A673 (cell line): ENCODE measurements at regions of chr5 and their contacts with region 1.

Region 1: DNA sequence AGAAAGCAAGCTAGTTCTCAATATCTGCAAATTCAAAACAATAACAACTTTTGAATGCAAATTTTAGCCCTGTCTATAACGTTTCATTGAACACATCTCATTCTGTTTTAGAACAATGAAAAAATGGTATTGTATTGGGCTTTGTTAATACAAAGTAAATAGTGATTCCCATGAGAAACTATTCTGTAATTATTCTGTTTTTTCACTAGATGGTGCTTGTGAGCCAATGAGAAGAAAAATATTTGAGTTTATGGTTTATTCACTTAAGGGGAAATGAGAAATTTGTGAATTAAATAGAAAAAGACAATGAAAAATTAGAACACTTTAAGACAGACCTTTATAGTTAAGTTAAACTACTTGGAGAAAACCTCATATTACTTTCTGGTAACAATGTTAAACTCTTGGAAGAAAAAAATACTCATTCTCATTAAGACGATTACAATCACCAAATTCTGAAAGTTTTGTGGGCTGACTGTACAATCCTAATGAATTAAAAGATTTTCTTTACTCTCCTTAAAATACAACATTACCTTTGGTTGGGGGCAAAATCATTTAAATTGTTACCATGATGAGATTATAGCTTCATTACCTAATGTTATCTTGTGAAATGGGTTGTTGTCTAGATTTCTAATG is 127.0 kb downstream of the NNT start:
- DNase-seq: peak; percentile 61
- H3K4me3 ChIP-seq: no peak overlapping the region
- H3K27ac ChIP-seq: no peak overlapping the region
- H3K4me1 ChIP-seq: peaks cover 12% of the 10 kb centered on the region
- H3K27me3 ChIP-seq: no peaks in the 10 kb centered on the region
- CTCF ChIP-seq: peak; percentile 71

Region 2: GRCh38 chr5:43256261-43256966 is 473.5 kb before region 1 on chr5:
- CTCF ChIA-PET with region 1: no interaction called
- POLR2A ChIA-PET with region 1: interaction called, 10 read pairs
- intact Hi-C with region 1: no loop called
- DNase-seq: no peak
- H3K4me3 ChIP-seq: no peak overlapping the region
- H3K27ac ChIP-seq: no peak overlapping the region
- H3K4me1 ChIP-seq: no peaks in the 10 kb centered on the region
- H3K27me3 ChIP-seq: no peaks in the 10 kb centered on the region
- CTCF ChIP-seq: no peak

Region 3: DNA sequence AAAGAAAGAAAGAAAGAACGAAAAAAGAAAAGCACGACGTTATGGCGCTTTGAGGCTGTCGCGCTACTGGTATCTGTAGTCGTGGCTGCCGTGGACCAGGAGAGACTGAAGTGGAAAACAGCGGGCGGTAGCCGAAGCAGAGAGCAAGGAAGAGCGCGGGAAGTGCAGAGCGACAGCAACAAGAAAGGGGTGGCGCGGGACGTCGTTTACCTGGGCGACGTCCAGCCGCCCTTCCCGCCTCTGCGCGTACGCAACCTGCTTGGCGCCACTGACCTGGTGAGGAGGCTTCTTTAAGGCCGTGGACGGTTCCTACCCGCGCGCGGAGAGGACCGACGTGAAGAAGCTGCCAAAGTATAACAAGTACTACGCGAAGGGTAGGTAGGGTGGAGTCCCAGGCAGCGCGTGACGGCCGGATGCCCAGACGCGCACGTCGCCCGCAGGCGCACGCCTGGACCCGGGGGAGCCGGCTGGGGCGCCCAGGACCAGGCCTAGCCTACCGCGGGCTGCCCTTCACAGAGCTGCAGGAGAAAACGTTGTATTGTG is 333.1 kb before region 1 on chr5:
- CTCF ChIA-PET with region 1: no interaction called
- POLR2A ChIA-PET with region 1: no interaction called
- intact Hi-C with region 1: no loop called
- DNase-seq: peak; percentile 46
- H3K4me3 ChIP-seq: peak overlapping the region; percentile 46
- H3K27ac ChIP-seq: no peak overlapping the region
- H3K4me1 ChIP-seq: no peaks in the 10 kb centered on the region
- H3K27me3 ChIP-seq: peaks cover 14% of the 10 kb centered on the region
- CTCF ChIP-seq: no peak

Region 4: GRCh38 chr5:43415946-43416802 is 313.8 kb before region 1 on chr5:
- CTCF ChIA-PET with region 1: no interaction called
- POLR2A ChIA-PET with region 1: no interaction called
- intact Hi-C with region 1: no loop called
- DNase-seq: no peak
- H3K4me3 ChIP-seq: no peak overlapping the region
- H3K27ac ChIP-seq: no peak overlapping the region
- H3K4me1 ChIP-seq: no peaks in the 10 kb centered on the region
- H3K27me3 ChIP-seq: no peaks in the 10 kb centered on the region
- CTCF ChIP-seq: no peak

Region 5: GRCh38 chr5:43572357-43572756 is 157.6 kb before region 1 on chr5:
- CTCF ChIA-PET with region 1: no interaction called
- POLR2A ChIA-PET with region 1: no interaction called
- intact Hi-C with region 1: no loop called
- DNase-seq: no peak
- H3K4me3 ChIP-seq: no peak overlapping the region
- H3K27ac ChIP-seq: no peak overlapping the region
- H3K4me1 ChIP-seq: no peaks in the 10 kb centered on the region
- H3K27me3 ChIP-seq: no peaks in the 10 kb centered on the region
- CTCF ChIP-seq: no peak

Region 6: DNA sequence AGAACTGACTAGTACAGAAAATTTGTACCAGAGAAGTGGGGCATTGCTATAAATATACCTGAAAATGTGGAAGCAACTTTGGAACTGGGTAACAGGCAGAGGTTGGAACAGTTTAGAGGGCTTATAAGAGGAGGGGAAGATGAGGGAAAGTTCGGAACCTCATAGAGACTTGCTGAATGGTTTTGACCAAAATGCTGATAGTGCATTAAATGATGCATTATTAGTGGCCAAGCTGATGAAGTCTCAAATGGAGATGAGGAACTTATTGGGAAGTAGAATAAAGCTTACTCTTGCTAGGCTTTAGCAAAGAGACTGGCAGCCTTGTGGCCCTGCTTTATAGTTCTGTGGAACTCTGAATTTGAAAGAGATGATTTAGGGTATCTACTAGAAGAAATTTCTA is 469.4 kb after region 1 on chr5:
- CTCF ChIA-PET with region 1: no interaction called
- POLR2A ChIA-PET with region 1: no interaction called
- intact Hi-C with region 1: no loop called
- DNase-seq: no peak
- H3K4me3 ChIP-seq: no peak overlapping the region
- H3K27ac ChIP-seq: no peak overlapping the region
- H3K4me1 ChIP-seq: no peaks in the 10 kb centered on the region
- H3K27me3 ChIP-seq: no peaks in the 10 kb centered on the region
- CTCF ChIP-seq: no peak

Region 7: GRCh38 chr5:44332285-44332971 is 602.5 kb after region 1 on chr5:
- CTCF ChIA-PET with region 1: interaction called, 3 read pairs
- POLR2A ChIA-PET with region 1: no interaction called
- intact Hi-C with region 1: loop called (anchors 1 kb)
- DNase-seq: peak; percentile 64
- H3K4me3 ChIP-seq: no peak overlapping the region
- H3K27ac ChIP-seq: no peak overlapping the region
- H3K4me1 ChIP-seq: peaks cover 4% of the 10 kb centered on the region
- H3K27me3 ChIP-seq: no peaks in the 10 kb centered on the region
- CTCF ChIP-seq: peak; percentile 75

Region 8: GRCh38 chr5:44389090-44389822 is 659.3 kb after region 1 on chr5 and contains the start of gene FGF10:
- CTCF ChIA-PET with region 1: no interaction called
- POLR2A ChIA-PET with region 1: interaction called, 12 read pairs
- intact Hi-C with region 1: no loop called
- DNase-seq: peak; percentile 50
- H3K4me3 ChIP-seq: peak within 1 kb of the TSS; percentile 52
- H3K27ac ChIP-seq: no peak within 1 kb of the TSS
- H3K4me1 ChIP-seq: peaks cover 13% of the 10 kb centered on the region
- H3K27me3 ChIP-seq: peaks cover 48% of the 10 kb centered on the region
- CTCF ChIP-seq: no peak
- total RNA-seq, gene FGF10: not detected in 2 replicates

Region 9: DNA sequence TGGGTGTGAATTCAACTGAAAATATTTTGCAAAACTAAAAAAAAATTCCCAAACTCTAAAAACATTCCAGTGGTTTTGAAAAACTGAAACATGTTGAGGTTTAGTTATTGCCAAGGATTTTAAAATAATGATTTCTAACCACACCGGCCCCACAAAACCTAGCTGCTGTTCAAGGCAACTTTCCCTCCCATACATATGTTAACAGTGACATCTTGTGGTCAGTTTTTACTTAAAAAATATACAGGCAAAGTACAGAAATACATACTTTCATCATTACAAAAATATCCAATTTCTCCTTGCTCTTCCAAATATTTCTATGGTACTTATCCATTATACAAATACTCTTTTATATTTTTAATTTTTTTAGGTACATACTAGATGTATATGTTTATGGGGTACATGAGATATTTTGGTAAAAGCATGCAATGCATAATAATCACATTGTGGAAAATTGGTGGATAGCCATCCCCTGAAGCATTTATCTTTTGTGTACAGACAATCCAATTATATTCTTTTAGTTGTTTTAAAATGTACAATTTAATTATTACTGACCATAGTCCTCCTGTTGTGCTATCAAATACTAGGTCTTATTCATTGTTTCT is 1044.4 kb after region 1 on chr5:
- CTCF ChIA-PET with region 1: no interaction called
- POLR2A ChIA-PET with region 1: no interaction called
- intact Hi-C with region 1: loop called (anchors 5 kb)
- DNase-seq: peak; percentile 67
- H3K4me3 ChIP-seq: no peak overlapping the region
- H3K27ac ChIP-seq: no peak overlapping the region
- H3K4me1 ChIP-seq: peaks cover 9% of the 10 kb centered on the region
- H3K27me3 ChIP-seq: no peaks in the 10 kb centered on the region
- CTCF ChIP-seq: peak; percentile 62